Endothelial cell of umbilical vein (primary cell): ENCODE measurements at regions of chr19 and their contacts with region 1.

Region 1: DNA sequence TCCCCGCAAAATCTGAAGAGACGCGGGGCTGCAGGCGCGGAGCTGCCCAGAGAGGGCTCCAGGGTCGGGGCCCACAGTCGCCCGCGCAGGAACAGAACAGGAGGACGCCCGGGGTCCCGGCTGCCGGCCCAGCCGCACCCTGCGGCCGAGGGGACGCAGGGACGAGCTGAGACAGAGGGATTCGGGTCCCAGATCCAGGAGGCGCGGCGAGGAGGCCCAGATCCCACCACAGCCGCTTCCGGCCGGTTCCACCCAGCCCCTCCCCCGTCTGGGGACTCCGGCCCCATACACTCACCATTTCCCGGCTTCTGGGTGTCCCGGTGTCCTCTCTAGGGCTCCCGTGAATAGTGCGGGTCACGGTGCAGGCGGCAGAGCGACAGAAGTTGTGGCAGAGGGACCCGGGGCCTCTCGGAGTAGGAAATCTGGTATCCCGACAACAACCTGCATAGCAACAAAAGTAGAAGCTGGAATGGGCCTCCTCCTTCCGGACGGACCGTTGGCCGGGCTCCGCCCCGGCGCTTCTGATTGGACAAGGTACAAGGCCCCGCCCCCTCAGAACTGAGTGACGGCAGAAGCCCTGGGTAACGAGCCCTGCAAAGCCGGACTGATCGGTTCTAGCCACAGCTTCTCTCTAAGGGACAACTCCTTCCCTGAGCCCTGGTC is at the start of gene ZNF20:
- DNase-seq: peak; percentile 90
- H3K4me3 ChIP-seq: peak within 1 kb of the TSS; percentile 63 to 72 (median 68)
- H3K27ac ChIP-seq: peak within 1 kb of the TSS; percentile 30
- H3K4me1 ChIP-seq: no peaks in the 10 kb centered on the region
- H3K27me3 ChIP-seq: no peaks in the 10 kb centered on the region
- CTCF ChIP-seq: no peak
- POLR2A ChIP-seq: no peak
- total RNA-seq, gene ZNF20: 0.35 and 0.88 TPM in 2 replicates

Region 2: GRCh38 chr19:11381535-11382369 is 758.3 kb before region 1 on chr19:
- CTCF ChIA-PET with region 1: no interaction called
- POLR2A ChIA-PET with region 1: no interaction called
- dilution Hi-C with region 1: no loop called
- intact Hi-C with region 1: no loop called
- DNase-seq: peak; percentile 81
- H3K4me3 ChIP-seq: peak overlapping the region; percentile 24 to 61 (median 47)
- H3K27ac ChIP-seq: peak overlapping the region; percentile 66
- H3K4me1 ChIP-seq: peaks cover 39% of the 10 kb centered on the region
- H3K27me3 ChIP-seq: no peaks in the 10 kb centered on the region
- CTCF ChIP-seq: peak; percentile 26 to 33
- POLR2A ChIP-seq: peak; percentile 51

Region 3: DNA sequence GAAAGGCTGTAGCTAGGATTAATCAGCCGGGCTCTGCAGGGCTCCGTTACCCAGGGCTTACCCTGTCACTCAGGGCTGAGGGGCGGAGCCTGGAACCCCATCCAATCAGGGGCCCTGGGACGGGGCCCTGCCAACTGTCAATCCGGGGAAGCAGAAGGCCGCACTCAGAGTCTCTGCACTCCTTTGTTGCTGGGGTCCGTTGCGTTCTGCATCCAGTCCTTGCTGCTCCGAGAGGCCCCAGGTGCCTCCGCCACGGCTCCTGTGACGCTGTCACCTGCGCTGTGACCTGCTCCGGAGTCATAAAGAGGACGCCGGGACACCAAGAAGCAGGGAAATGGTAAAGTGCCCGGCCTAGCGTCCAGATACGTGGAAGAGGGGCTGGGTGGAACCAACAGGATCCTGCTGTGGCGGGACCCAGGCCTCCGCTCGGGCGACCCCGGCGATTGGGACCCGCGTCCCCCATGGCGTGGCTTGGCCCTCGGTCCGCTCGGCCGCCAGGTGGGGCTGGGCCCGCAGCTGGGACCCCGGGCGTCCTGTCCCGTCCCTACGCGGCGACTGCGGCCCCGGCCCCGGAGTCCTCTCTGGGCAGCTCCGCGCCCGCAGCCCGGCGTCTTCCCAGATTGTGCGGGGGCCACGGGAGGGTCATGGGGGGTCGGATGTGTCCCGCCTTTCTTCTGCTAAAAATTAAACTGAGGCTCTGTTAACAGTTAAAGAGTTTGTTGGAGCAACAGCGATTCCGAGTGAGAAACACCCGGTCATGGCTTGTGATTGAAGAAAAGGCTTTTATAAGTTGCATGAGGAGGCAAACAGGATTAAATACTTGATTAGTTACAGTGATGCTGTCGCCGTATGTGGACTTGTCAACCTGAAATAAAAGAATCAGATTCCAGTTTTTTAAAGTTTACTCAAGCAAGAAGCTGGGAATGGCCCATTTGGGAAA is 341.4 kb before region 1 on chr19 and contains the start of gene ZNF491:
- CTCF ChIA-PET with region 1: interaction called, 21 read pairs
- POLR2A ChIA-PET with region 1: no interaction called
- dilution Hi-C with region 1: no loop called
- intact Hi-C with region 1: loop called (anchors 2 kb)
- DNase-seq: peak; percentile 83
- H3K4me3 ChIP-seq: peak within 1 kb of the TSS; percentile 39 to 75 (median 62)
- H3K27ac ChIP-seq: no peak within 1 kb of the TSS
- H3K4me1 ChIP-seq: peaks cover 7% of the 10 kb centered on the region
- H3K27me3 ChIP-seq: no peaks in the 10 kb centered on the region
- CTCF ChIP-seq: peak; percentile 13 to 21
- POLR2A ChIP-seq: peak; percentile 52
- total RNA-seq, gene ZNF491: 0.85 and 1.1 TPM in 2 replicates

Region 4: DNA sequence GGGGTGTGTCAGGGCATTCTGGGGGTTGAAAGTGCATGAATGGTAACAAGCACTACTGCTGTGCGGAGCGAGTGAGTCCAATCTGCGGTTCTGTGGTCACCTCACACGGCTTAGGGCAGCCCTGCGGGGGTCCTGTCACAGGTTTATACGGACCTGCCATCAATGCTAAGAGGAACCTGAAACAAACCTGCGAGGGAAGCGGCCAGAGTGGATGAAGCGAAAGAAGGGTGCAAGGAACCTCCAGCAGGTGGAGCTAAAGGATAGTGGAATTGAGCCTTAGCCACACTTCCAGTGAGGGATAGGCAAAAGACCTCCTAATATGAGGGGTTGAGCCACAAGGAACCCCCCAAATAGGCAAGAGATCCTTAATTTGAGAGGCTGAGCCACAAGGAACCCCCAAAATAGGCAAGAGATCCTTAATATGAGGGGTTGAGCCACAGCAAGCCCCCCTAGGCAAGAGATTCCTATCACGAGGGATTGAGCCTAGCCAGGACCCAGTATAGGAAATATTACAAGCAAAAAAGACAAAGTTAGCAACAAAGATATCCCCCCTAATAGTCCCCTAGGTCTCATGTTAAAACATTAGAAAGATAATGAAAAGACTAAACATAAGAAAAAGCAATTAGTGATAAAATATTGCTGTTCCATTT is 258.7 kb before region 1 on chr19:
- CTCF ChIA-PET with region 1: no interaction called
- POLR2A ChIA-PET with region 1: no interaction called
- dilution Hi-C with region 1: no loop called
- intact Hi-C with region 1: loop called (anchors 1 kb)
- DNase-seq: peak; percentile 54
- H3K4me3 ChIP-seq: no peak overlapping the region
- H3K27ac ChIP-seq: no peak overlapping the region
- H3K4me1 ChIP-seq: no peaks in the 10 kb centered on the region
- H3K27me3 ChIP-seq: no peaks in the 10 kb centered on the region
- CTCF ChIP-seq: peak; percentile 68 to 70
- POLR2A ChIP-seq: no peak

Region 5: GRCh38 chr19:12055783-12056182 is 84.2 kb before region 1 on chr19:
- CTCF ChIA-PET with region 1: interaction called, 20 read pairs
- POLR2A ChIA-PET with region 1: no interaction called
- dilution Hi-C with region 1: no loop called
- intact Hi-C with region 1: loop called (anchors 1 kb)
- DNase-seq: no peak
- H3K4me3 ChIP-seq: no peak overlapping the region
- H3K27ac ChIP-seq: no peak overlapping the region
- H3K4me1 ChIP-seq: peaks cover 10% of the 10 kb centered on the region
- H3K27me3 ChIP-seq: no peaks in the 10 kb centered on the region
- CTCF ChIP-seq: no peak
- POLR2A ChIP-seq: no peak

Region 6: GRCh38 chr19:12092065-12092867 is 47.8 kb before region 1 on chr19:
- CTCF ChIA-PET with region 1: interaction called, 17 read pairs
- POLR2A ChIA-PET with region 1: no interaction called
- dilution Hi-C with region 1: no loop called
- intact Hi-C with region 1: loop called (anchors 1 kb)
- DNase-seq: peak; percentile 71
- H3K4me3 ChIP-seq: peak overlapping the region; percentile 33 to 49 (median 44)
- H3K27ac ChIP-seq: no peak overlapping the region
- H3K4me1 ChIP-seq: peaks cover 3% of the 10 kb centered on the region
- H3K27me3 ChIP-seq: no peaks in the 10 kb centered on the region
- CTCF ChIP-seq: no peak
- POLR2A ChIP-seq: peak; percentile 47

Region 7: GRCh38 chr19:12117203-12117970 is 22.6 kb before region 1 on chr19:
- CTCF ChIA-PET with region 1: no interaction called
- POLR2A ChIA-PET with region 1: no interaction called
- dilution Hi-C with region 1: no loop called
- intact Hi-C with region 1: no loop called
- DNase-seq: no peak
- H3K4me3 ChIP-seq: no peak overlapping the region
- H3K27ac ChIP-seq: no peak overlapping the region
- H3K4me1 ChIP-seq: no peaks in the 10 kb centered on the region
- H3K27me3 ChIP-seq: no peaks in the 10 kb centered on the region
- CTCF ChIP-seq: no peak
- POLR2A ChIP-seq: no peak

Region 8: DNA sequence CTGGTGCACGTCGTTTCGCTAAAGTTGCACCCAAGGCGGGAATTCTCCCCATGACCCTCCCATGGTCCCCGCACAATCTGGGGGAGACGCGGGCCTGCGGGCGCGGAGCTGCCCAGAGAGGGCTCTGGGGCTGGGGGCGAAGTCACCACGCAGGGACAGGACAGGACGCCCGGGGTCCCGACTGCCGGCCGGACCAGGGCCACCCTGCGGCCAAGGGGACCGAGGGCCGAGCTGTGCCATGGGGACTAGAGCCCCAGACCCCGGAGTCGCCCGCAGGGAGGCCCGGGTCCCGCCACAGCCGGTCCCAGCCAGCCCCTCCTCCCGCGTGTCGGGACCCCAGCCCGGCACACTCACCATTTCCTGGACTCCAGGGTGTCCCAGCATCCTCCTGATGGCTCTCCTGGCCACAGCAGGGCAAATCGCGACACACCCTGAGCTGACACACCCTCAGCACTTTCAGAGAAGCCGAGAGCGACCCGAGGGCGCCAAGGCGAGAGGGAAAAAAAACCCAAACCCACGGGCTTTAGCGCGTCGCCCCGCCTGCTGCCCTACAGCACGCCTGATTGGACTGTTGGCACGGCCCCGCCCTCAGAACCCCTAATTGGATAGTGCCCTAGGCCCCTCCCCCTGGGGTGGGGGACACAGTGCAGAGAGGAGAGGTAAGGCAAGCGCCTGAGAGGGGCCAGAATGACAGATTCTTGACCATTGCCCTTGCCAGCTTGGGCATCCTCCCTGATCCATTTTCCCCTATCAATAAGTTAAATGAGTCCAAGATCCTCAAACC is 126.1 kb after region 1 on chr19:
- CTCF ChIA-PET with region 1: no interaction called
- POLR2A ChIA-PET with region 1: no interaction called
- dilution Hi-C with region 1: no loop called
- intact Hi-C with region 1: no loop called
- DNase-seq: no peak
- H3K4me3 ChIP-seq: no peak overlapping the region
- H3K27ac ChIP-seq: no peak overlapping the region
- H3K4me1 ChIP-seq: no peaks in the 10 kb centered on the region
- H3K27me3 ChIP-seq: no peaks in the 10 kb centered on the region
- CTCF ChIP-seq: no peak
- POLR2A ChIP-seq: no peak